ENCODE measurements at regions of chr2 and their contacts with region 1.

Region 1: GRCh38 chr2:31233741-31234682 is at the start of gene EHD3:
- DNase-seq: peak; percentile 89
- H3K4me3 Mint-ChIP-seq: peak within 1 kb of the TSS; percentile 70
- H3K27ac Mint-ChIP-seq: no peak within 1 kb of the TSS
- H3K4me1 Mint-ChIP-seq: peaks cover 8% of the 10 kb centered on the region
- H3K27me3 Mint-ChIP-seq: peaks cover 46% of the 10 kb centered on the region
- CTCF ChIP-seq: peak; percentile 22
- total RNA-seq, gene EHD3: 1.7 and 2.2 TPM in 2 replicates

Region 2: GRCh38 chr2:31151501-31151900 is 82.5 kb before region 1 on chr2:
- CTCF ChIA-PET with region 1: no interaction called
- intact Hi-C with region 1: no loop called
- DNase-seq: no peak
- H3K4me3 Mint-ChIP-seq: no peak overlapping the region
- H3K27ac Mint-ChIP-seq: no peak overlapping the region
- H3K4me1 Mint-ChIP-seq: no peaks in the 10 kb centered on the region
- H3K27me3 Mint-ChIP-seq: peaks cover 86% of the 10 kb centered on the region
- CTCF ChIP-seq: no peak

Region 3: GRCh38 chr2:31271791-31272277 is 37.8 kb after region 1 on chr2:
- CTCF ChIA-PET with region 1: no interaction called
- intact Hi-C with region 1: no loop called
- DNase-seq: no peak
- H3K4me3 Mint-ChIP-seq: no peak overlapping the region
- H3K27ac Mint-ChIP-seq: no peak overlapping the region
- H3K4me1 Mint-ChIP-seq: no peaks in the 10 kb centered on the region
- H3K27me3 Mint-ChIP-seq: peaks cover 80% of the 10 kb centered on the region
- CTCF ChIP-seq: no peak

Region 4: GRCh38 chr2:31434911-31435310 is 200.9 kb after region 1 on chr2:
- CTCF ChIA-PET with region 1: interaction called, 4 read pairs
- intact Hi-C with region 1: loop called (anchors 5 kb)
- DNase-seq: peak; percentile 48
- H3K4me3 Mint-ChIP-seq: no peak overlapping the region
- H3K27ac Mint-ChIP-seq: no peak overlapping the region
- H3K4me1 Mint-ChIP-seq: peaks cover 8% of the 10 kb centered on the region
- H3K27me3 Mint-ChIP-seq: no peaks in the 10 kb centered on the region
- CTCF ChIP-seq: peak; percentile 46

Measured in Calu3 (cell line).